CD8-positive, alpha-beta T cell (primary cell): ENCODE measurements at regions of chr12 and their contacts with region 1.

Region 1: GRCh38 chr12:103901518-103902173 is 28.6 kb upstream of the HSP90B1 start:
- DNase-seq: peak; percentile 22 to 81 (median 59)
- ATAC-seq: peak; percentile 96
- H3K4me3 ChIP-seq: peak overlapping the region; percentile 6 to 53
- H3K4me3 Mint-ChIP-seq: peak overlapping the region; percentile 76
- H3K27ac ChIP-seq: peak overlapping the region; percentile 28 to 54
- H3K27ac Mint-ChIP-seq: peak overlapping the region; percentile 94
- H3K4me1 ChIP-seq: peaks cover 56% of the 10 kb centered on the region
- H3K4me1 Mint-ChIP-seq: peaks cover 69% of the 10 kb centered on the region
- H3K27me3 ChIP-seq: no peaks in the 10 kb centered on the region
- H3K27me3 Mint-ChIP-seq: no peaks in the 10 kb centered on the region
- CTCF ChIP-seq: no peak

Region 2: DNA sequence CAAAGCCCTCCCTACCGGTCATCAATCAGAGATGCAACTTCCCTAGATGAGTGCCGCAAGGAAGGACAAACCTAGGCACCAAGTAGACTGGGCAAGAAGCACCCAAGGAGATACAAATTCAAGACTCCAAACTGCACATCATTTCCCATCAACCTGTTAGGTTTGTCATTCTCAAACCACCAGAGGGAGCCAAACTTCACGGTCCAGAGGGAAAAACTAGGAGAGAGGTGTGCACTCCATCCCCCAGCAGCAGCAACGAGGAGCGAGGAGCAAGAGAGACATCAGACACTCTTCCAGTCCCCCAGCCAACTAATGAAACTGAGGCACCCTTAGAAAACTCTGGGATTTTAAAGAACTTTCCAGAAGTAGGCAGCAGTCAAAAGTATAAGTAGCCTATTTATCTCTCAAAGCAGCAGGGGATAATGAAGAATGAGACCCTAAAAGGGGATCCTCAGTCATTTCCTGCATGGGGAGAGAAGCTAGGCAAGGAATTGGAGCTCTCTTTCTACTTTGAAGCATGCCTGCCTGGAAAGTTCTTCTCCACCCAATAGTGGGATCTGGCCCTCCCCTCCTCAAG is 23.6 kb before region 1 on chr12:
- CTCF ChIA-PET with region 1: interaction called, 17 read pairs
- POLR2A ChIA-PET with region 1: no interaction called
- intact Hi-C with region 1: no loop called
- DNase-seq: peak; percentile 5 to 80 (median 48)
- ATAC-seq: peak; percentile 64
- H3K4me3 ChIP-seq: no peak overlapping the region
- H3K4me3 Mint-ChIP-seq: no peak overlapping the region
- H3K27ac ChIP-seq: no peak overlapping the region
- H3K27ac Mint-ChIP-seq: no peak overlapping the region
- H3K4me1 ChIP-seq: peaks cover 6% of the 10 kb centered on the region
- H3K4me1 Mint-ChIP-seq: peaks cover 10% of the 10 kb centered on the region
- H3K27me3 ChIP-seq: no peaks in the 10 kb centered on the region
- H3K27me3 Mint-ChIP-seq: no peaks in the 10 kb centered on the region
- CTCF ChIP-seq: peak; percentile 70

Region 3: GRCh38 chr12:103884316-103884715 is 17.3 kb before region 1 on chr12:
- CTCF ChIA-PET with region 1: interaction called, 17 read pairs
- POLR2A ChIA-PET with region 1: interaction called, 4 read pairs
- intact Hi-C with region 1: loop called (anchors 2 kb)
- DNase-seq: peak; percentile 10 to 76 (median 43)
- ATAC-seq: peak; percentile 67
- H3K4me3 ChIP-seq: no peak overlapping the region
- H3K4me3 Mint-ChIP-seq: no peak overlapping the region
- H3K27ac ChIP-seq: no peak overlapping the region
- H3K27ac Mint-ChIP-seq: no peak overlapping the region
- H3K4me1 ChIP-seq: peaks cover 11% of the 10 kb centered on the region
- H3K4me1 Mint-ChIP-seq: peaks cover 32% of the 10 kb centered on the region
- H3K27me3 ChIP-seq: no peaks in the 10 kb centered on the region
- H3K27me3 Mint-ChIP-seq: no peaks in the 10 kb centered on the region
- CTCF ChIP-seq: peak; percentile 71

Region 4: GRCh38 chr12:103915306-103915705 is 13.7 kb after region 1 on chr12:
- CTCF ChIA-PET with region 1: interaction called, 3 read pairs
- POLR2A ChIA-PET with region 1: interaction called, 12 read pairs
- intact Hi-C with region 1: loop called in 1 of 2 experiments (anchors 2 kb)
- DNase-seq: no peak
- ATAC-seq: no peak
- H3K4me3 ChIP-seq: no peak overlapping the region
- H3K4me3 Mint-ChIP-seq: no peak overlapping the region
- H3K27ac ChIP-seq: no peak overlapping the region
- H3K27ac Mint-ChIP-seq: no peak overlapping the region
- H3K4me1 ChIP-seq: no peaks in the 10 kb centered on the region
- H3K4me1 Mint-ChIP-seq: no peaks in the 10 kb centered on the region
- H3K27me3 ChIP-seq: no peaks in the 10 kb centered on the region
- H3K27me3 Mint-ChIP-seq: no peaks in the 10 kb centered on the region
- CTCF ChIP-seq: no peak

Region 5: DNA sequence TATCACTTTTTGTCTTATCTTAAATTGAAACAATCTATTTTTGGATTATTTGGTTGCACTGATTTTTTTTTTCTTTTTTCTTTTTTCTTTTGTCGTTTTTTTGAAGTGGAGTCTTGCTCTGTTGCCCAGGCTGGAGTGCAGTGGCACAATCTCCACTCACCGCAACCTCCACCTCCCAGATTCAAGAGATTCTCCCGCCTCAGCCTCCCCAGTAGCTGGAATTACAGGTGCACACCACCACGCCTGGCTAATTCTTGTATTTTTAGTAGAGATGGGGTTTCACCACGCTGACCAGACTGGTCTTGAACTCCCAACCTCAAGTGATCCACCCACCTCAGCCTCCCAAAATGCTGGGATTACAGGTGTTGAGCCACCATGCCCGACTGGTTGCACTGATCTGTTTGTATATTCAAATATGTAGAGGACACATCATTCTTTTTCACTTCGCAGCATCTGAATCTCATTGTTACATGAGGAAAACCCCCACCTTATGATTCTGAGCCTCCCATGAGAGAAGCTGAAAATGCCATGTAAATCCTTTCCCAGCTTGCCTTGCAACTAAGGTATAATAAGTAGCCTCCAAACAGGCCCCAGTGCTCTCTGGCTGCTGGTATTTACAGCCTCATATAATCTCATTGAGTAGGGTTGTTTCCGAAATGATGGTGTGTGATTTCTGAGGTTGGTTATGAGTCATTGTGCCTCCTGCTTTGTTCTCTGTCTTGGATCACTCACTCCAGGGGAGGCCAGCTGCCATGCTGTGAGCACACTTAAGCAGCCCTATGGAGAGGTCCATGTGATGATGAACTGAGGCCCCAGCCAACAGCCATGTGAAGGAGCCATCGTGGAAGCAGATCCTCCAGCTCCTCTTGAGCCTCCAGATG is 23.4 kb after region 1 on chr12:
- CTCF ChIA-PET with region 1: interaction called, 4 read pairs
- POLR2A ChIA-PET with region 1: interaction called, 122 read pairs
- intact Hi-C with region 1: loop called (anchors 1 to 2 kb)
- DNase-seq: peak in 5 of 9 experiments; percentile 22 to 57 (median 36)
- ATAC-seq: no peak
- H3K4me3 ChIP-seq: no peak overlapping the region
- H3K4me3 Mint-ChIP-seq: no peak overlapping the region
- H3K27ac ChIP-seq: no peak overlapping the region
- H3K27ac Mint-ChIP-seq: peak overlapping the region; percentile 49
- H3K4me1 ChIP-seq: peaks cover 15% of the 10 kb centered on the region
- H3K4me1 Mint-ChIP-seq: peaks cover 25% of the 10 kb centered on the region
- H3K27me3 ChIP-seq: no peaks in the 10 kb centered on the region
- H3K27me3 Mint-ChIP-seq: no peaks in the 10 kb centered on the region
- CTCF ChIP-seq: no peak

Region 6: DNA sequence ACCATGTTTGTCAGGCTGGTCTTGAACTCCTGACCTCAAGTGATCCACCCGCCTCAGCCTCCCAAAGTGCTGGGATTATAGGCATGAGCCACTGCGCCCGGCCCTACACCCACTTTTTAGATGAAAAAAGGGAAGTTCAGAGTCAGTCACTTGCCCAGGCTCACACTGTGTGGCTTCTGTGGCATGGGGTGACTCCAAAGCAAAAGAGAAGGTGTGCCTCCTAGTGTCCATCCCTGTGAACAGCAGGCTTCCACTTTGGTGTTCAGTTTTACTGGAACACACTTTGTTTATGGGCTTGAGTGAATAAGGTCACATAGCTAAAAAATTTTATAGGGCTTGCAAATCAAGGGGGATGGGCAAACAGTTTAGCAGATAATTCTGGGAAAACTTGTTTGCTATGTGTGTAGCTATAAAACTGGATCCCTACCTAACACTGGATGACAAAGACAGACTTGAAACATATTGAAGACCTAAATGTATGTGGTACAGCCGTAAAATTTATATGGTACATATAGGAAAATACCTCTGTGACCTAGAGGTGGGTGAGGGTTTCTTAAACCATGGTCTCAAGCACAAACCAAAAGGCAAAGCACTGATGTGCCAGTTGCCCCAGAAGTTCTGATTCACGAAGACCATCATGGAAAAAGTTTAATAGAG is 456.8 kb after region 1 on chr12:
- CTCF ChIA-PET with region 1: no interaction called
- POLR2A ChIA-PET with region 1: no interaction called
- intact Hi-C with region 1: no loop called
- DNase-seq: peak; percentile 38 to 80 (median 69)
- ATAC-seq: peak; percentile 98
- H3K4me3 ChIP-seq: no peak overlapping the region
- H3K4me3 Mint-ChIP-seq: no peak overlapping the region
- H3K27ac ChIP-seq: no peak overlapping the region
- H3K27ac Mint-ChIP-seq: no peak overlapping the region
- H3K4me1 ChIP-seq: no peaks in the 10 kb centered on the region
- H3K4me1 Mint-ChIP-seq: no peaks in the 10 kb centered on the region
- H3K27me3 ChIP-seq: no peaks in the 10 kb centered on the region
- H3K27me3 Mint-ChIP-seq: no peaks in the 10 kb centered on the region
- CTCF ChIP-seq: peak; percentile 83

Region 7: DNA sequence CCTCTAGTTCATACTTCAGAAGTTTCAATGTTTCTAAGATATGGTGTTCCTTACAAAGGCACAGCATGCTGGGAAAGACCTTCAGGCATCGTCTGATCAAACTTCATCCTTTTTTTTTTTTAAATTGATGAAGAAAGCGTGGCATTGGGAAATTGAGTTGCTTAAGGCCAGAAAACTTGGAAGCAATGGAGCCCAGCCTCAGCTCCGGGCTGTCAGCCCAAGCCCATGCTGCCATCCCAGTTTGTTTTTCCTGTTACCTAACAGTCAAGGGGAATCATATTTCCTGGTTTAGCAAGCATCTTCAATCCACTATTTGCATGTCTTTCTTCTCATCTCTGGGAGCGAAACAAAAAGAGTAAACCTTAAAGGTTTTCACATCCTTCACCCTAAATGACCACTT is 755.3 kb after region 1 on chr12:
- CTCF ChIA-PET with region 1: no interaction called
- POLR2A ChIA-PET with region 1: no interaction called
- intact Hi-C with region 1: no loop called
- DNase-seq: no peak
- ATAC-seq: no peak
- H3K4me3 ChIP-seq: no peak overlapping the region
- H3K4me3 Mint-ChIP-seq: no peak overlapping the region
- H3K27ac ChIP-seq: no peak overlapping the region
- H3K27ac Mint-ChIP-seq: no peak overlapping the region
- H3K4me1 ChIP-seq: no peaks in the 10 kb centered on the region
- H3K4me1 Mint-ChIP-seq: peaks cover 26% of the 10 kb centered on the region
- H3K27me3 ChIP-seq: no peaks in the 10 kb centered on the region
- H3K27me3 Mint-ChIP-seq: no peaks in the 10 kb centered on the region
- CTCF ChIP-seq: no peak